ENCODE measurements at regions of chr1 and their contacts with region 1.

Region 1: GRCh38 chr1:164625001-164625617 is 66.1 kb downstream of the PBX1 start:
- DNase-seq: no peak
- ATAC-seq: no peak
- H3K4me3 ChIP-seq: no peak overlapping the region
- H3K27ac ChIP-seq: peak overlapping the region in 1 of 10 donors; percentile 17
- H3K4me1 ChIP-seq: peaks cover 4 to 65% (median 41%) of the 10 kb centered on the region in 9 donors
- H3K27me3 ChIP-seq: no peaks in the 10 kb centered on the region
- CTCF ChIP-seq: peak in 4 of 9 donors; percentile 17 to 34 (median 22)

Region 2: DNA sequence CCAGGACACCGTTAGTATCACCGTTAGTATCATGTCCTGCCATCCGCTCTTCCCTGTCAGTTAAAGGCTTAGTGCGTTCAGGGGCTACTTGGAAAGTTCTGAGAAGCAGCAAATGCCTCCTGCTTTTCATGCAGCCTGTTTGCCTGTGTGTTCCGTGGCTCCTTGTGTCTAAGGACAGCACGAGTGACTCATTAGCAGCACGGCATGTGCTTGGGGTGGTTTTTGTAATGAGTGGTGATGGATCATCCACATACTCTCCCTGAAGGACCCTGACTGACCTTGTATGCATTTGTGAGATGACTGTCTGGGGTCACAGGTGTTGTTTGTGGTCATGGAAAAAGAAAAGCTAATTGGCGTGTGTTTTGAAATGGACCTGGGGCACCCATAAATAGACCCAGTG is 155.8 kb after region 1 on chr1:
- intact Hi-C with region 1: loop called in 4 of 10 experiments (anchors 5 to 10 kb)
- DNase-seq: peak in 1 of 2 donors; percentile 24
- ATAC-seq: peak; percentile 40 to 93 (median 68)
- H3K4me3 ChIP-seq: no peak overlapping the region
- H3K27ac ChIP-seq: peak overlapping the region in 9 of 10 donors; percentile 35 to 80 (median 62)
- H3K4me1 ChIP-seq: peaks cover 12 to 67% (median 48%) of the 10 kb centered on the region in 9 donors
- H3K27me3 ChIP-seq: no peaks in the 10 kb centered on the region
- CTCF ChIP-seq: no peak

Region 3: GRCh38 chr1:164846731-164847691 is 221.9 kb after region 1 on chr1:
- intact Hi-C with region 1: no loop called
- DNase-seq: no peak
- ATAC-seq: peak in 6 of 8 donors; percentile 25 to 60 (median 49)
- H3K4me3 ChIP-seq: no peak overlapping the region
- H3K27ac ChIP-seq: peak overlapping the region in 6 of 10 donors; percentile 12 to 55 (median 18)
- H3K4me1 ChIP-seq: peaks cover 0 to 35% (median 19%) of the 10 kb centered on the region in 9 donors
- H3K27me3 ChIP-seq: no peaks in the 10 kb centered on the region
- CTCF ChIP-seq: no peak

Measured in heart right ventricle (tissue), 16 donors.